CD8-positive, alpha-beta memory T cell (primary cell): ENCODE measurements at regions of chr2 and their contacts with region 1.

Region 1: DNA sequence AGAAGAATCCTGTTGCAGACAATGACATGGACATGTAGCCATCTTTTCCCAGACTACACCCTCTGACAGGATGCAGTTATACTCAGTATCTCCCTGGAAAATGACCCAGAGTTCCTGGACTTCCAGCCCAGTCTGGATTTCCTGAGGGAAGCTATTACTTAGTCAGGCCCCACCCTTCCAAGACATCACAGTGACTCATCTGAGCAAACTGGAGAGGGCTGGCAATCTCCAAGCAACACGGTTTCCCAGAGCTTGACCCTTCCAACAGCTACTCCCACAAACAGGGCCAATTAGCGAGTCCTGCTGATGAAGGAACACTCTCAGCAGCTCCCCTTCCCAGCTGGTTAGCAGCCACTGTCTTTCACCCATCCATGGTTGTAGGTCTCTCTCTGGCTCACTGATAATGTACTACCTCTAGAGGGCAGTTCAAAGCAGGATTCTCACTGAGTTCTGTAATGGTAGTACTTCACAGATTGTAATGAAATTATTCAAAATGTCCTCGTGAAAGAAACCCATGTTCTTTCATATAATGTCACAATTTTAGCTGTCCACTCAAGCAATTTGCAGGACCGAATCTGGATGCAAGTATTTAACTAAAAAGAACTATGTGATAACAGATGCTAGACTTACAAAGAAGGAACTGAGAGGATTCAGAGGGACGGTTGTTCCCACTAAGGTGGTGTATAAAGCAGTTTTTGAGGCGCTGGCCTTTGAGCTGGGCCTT is 110.2 kb downstream of the MDH1 start:
- DNase-seq: peak in 1 of 5 donors; percentile 29
- H3K4me3 ChIP-seq: no peak overlapping the region
- H3K4me3 Mint-ChIP-seq: no peak overlapping the region
- H3K27ac ChIP-seq: no peak overlapping the region
- H3K27ac Mint-ChIP-seq: peak overlapping the region in 3 of 8 donors; percentile 19 to 61 (median 22)
- H3K4me1 ChIP-seq: no peaks in the 10 kb centered on the region
- H3K4me1 Mint-ChIP-seq: no peaks in the 10 kb centered on the region
- H3K27me3 ChIP-seq: no peaks in the 10 kb centered on the region
- H3K27me3 Mint-ChIP-seq: peaks cover 0 to 2% of the 10 kb centered on the region in 2 donors

Region 2: DNA sequence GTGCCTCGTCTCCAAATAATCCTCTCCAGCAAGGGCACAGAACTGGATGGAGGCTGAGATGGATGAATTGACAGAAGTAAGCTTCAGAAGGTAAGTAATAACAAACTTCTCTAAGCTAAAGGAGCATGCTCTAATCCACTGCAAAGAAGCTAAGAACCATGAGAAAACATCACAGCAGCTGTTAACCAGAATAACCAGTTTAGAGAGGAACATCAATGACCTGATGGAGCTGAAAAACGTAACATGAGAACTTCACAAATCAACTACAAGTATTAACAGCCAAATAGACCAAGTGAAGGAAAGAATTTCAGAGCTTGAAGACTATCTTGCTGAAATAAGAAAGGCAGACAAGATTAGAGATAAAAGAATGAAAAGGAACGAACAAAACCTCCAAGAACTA is 143.0 kb before region 1 on chr2:
- CTCF ChIA-PET with region 1: no interaction called
- POLR2A ChIA-PET with region 1: no interaction called
- DNase-seq: no peak
- H3K4me3 ChIP-seq: no peak overlapping the region
- H3K4me3 Mint-ChIP-seq: peak overlapping the region in 1 of 7 donors; percentile 48
- H3K27ac ChIP-seq: no peak overlapping the region
- H3K27ac Mint-ChIP-seq: no peak overlapping the region
- H3K4me1 ChIP-seq: no peaks in the 10 kb centered on the region
- H3K4me1 Mint-ChIP-seq: peaks cover 6 to 7% (median 6%) of the 10 kb centered on the region in 3 donors
- H3K27me3 ChIP-seq: no peaks in the 10 kb centered on the region
- H3K27me3 Mint-ChIP-seq: no peaks in the 10 kb centered on the region

Region 3: GRCh38 chr2:63856303-63856603 is 157.3 kb after region 1 on chr2:
- CTCF ChIA-PET with region 1: interaction called, 23 read pairs
- POLR2A ChIA-PET with region 1: no interaction called
- DNase-seq: peak; percentile 34 to 77 (median 52)
- H3K4me3 ChIP-seq: peak overlapping the region; percentile 27
- H3K4me3 Mint-ChIP-seq: peak overlapping the region; percentile 46 to 74 (median 64)
- H3K27ac ChIP-seq: peak overlapping the region; percentile 33
- H3K27ac Mint-ChIP-seq: peak overlapping the region; percentile 90 to 96 (median 94)
- H3K4me1 ChIP-seq: peaks cover 50% of the 10 kb centered on the region
- H3K4me1 Mint-ChIP-seq: peaks cover 63 to 71% (median 71%) of the 10 kb centered on the region in 3 donors
- H3K27me3 ChIP-seq: no peaks in the 10 kb centered on the region
- H3K27me3 Mint-ChIP-seq: no peaks in the 10 kb centered on the region